CD14-positive monocyte (primary cell): ENCODE measurements at regions of chr10 and their contacts with region 1.

Region 1: DNA sequence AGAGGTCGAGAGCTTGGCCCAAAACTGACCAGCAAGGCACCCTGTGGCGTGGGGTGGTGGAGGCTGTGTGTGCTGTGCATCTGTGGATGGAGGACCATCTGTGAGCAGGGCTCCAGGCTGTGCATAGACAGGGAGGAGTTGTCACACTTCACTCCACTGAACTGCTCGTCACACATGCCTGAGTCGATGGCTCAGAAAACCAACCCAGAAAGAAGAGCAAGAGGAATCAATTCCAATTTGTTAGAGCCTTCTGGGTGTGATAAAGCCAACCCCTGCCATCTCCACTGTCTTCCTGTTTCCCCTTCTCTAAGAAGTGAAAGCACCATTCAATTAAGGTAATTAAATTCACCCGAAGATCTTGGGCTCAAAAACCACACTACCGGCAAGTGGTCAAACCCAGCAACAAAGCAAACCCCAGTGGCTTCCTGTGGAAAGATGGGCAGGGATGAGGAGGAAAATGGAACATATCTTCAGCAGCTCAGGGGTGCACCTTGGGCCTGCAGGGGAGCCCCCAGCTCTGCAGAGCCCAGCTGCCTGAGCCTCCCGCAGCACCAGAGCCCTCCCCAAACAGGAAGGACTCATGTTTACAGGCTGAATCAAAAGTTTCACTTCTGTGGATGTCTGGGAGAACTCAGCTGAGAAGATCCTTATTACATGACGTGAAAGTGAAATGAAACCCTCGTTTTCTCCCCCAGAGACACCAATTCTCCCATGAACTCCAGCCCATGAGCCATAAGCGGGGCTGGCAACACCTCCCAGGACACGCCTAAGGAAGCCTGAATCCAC is 10.8 kb downstream of the C10orf71 start:
- DNase-seq: peak in 2 of 3 donors; percentile 22 to 35
- H3K4me3 ChIP-seq: peak overlapping the region in 2 of 3 experiments; percentile 16 to 47
- H3K4me3 Mint-ChIP-seq: peak overlapping the region; percentile 52 to 56
- H3K27ac ChIP-seq: peak overlapping the region; percentile 95 to 96
- H3K27ac Mint-ChIP-seq: peak overlapping the region; percentile 89 to 96 (median 94)
- H3K4me1 ChIP-seq: peaks cover 39 to 45% of the 10 kb centered on the region in 2 donors
- H3K4me1 Mint-ChIP-seq: peaks cover 56% of the 10 kb centered on the region
- H3K27me3 ChIP-seq: no peaks in the 10 kb centered on the region
- H3K27me3 Mint-ChIP-seq: peaks cover 2 to 7% (median 3%) of the 10 kb centered on the region in 3 donors
- CTCF ChIP-seq: no peak

Region 2: DNA sequence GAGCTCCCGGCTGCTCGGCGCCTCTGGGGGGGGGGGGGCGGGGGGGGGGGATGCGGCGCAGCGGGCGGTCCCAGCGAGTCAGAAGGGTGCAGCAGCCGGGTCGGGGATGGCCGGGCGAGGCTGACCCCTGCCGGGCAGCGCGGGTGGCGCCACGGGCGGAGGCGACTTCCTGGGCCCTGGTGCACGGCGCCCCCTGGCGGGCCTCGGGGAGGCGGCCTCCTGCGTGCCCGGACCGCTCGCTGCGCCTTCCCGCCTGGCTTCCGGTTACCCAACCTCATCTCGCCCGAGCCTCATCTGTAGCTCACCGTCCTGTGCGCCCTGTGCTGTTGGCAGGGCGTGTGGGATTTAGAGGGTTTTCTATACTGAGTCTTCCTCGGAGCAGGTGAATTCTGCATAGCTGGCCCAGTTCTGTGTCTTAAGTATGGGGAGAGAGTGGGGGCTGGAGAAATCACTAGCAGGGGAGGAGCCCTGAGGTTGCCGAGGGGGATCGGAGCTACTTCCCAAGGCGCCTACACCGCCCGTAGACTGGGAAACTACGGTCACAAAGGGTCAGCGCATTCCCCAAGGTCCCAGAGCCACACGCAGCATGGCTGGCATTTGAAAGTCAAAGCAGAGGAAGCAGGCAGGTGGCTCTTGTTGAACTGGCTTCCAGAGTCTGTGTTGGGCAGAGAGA is 653.4 kb before region 1 on chr10:
- intact Hi-C with region 1: no loop called
- DNase-seq: peak; percentile 91 to 96 (median 91)
- H3K4me3 ChIP-seq: peak overlapping the region; percentile 24 to 74 (median 44)
- H3K4me3 Mint-ChIP-seq: peak overlapping the region; percentile 71 to 83
- H3K27ac ChIP-seq: peak overlapping the region in 1 of 2 donors; percentile 54
- H3K27ac Mint-ChIP-seq: peak overlapping the region in 2 of 7 donors; percentile 8 to 60
- H3K4me1 ChIP-seq: peaks cover 36 to 38% of the 10 kb centered on the region in 2 donors
- H3K4me1 Mint-ChIP-seq: peaks cover 28% of the 10 kb centered on the region
- H3K27me3 ChIP-seq: peaks cover 0 to 8% of the 10 kb centered on the region in 2 donors
- H3K27me3 Mint-ChIP-seq: peaks cover 18 to 37% (median 22%) of the 10 kb centered on the region in 3 donors
- CTCF ChIP-seq: peak; percentile 100

Region 3: GRCh38 chr10:49177391-49178355 is 132.1 kb before region 1 on chr10:
- intact Hi-C with region 1: loop called in 1 of 2 experiments (anchors 10 kb)
- DNase-seq: peak; percentile 96 to 99 (median 98)
- H3K4me3 ChIP-seq: no peak overlapping the region
- H3K4me3 Mint-ChIP-seq: peak overlapping the region; percentile 65 to 79
- H3K27ac ChIP-seq: peak overlapping the region; percentile 74 to 93
- H3K27ac Mint-ChIP-seq: peak overlapping the region; percentile 95 to 99 (median 96)
- H3K4me1 ChIP-seq: peaks cover 38 to 43% of the 10 kb centered on the region in 2 donors
- H3K4me1 Mint-ChIP-seq: peaks cover 55% of the 10 kb centered on the region
- H3K27me3 ChIP-seq: no peaks in the 10 kb centered on the region
- H3K27me3 Mint-ChIP-seq: peaks cover 0 to 11% (median 3%) of the 10 kb centered on the region in 3 donors
- CTCF ChIP-seq: no peak

Region 4: GRCh38 chr10:49242604-49243003 is 67.2 kb before region 1 on chr10:
- intact Hi-C with region 1: loop called in 1 of 2 experiments (anchors 5 kb)
- DNase-seq: no peak
- H3K4me3 ChIP-seq: peak overlapping the region in 1 of 3 experiments; percentile 3
- H3K4me3 Mint-ChIP-seq: no peak overlapping the region
- H3K27ac ChIP-seq: peak overlapping the region; percentile 57 to 71
- H3K27ac Mint-ChIP-seq: peak overlapping the region in 6 of 7 donors; percentile 80 to 96 (median 87)
- H3K4me1 ChIP-seq: peaks cover 50 to 55% of the 10 kb centered on the region in 2 donors
- H3K4me1 Mint-ChIP-seq: peaks cover 54% of the 10 kb centered on the region
- H3K27me3 ChIP-seq: no peaks in the 10 kb centered on the region
- H3K27me3 Mint-ChIP-seq: peaks cover 0 to 5% (median 0%) of the 10 kb centered on the region in 3 donors
- CTCF ChIP-seq: no peak

Region 5: DNA sequence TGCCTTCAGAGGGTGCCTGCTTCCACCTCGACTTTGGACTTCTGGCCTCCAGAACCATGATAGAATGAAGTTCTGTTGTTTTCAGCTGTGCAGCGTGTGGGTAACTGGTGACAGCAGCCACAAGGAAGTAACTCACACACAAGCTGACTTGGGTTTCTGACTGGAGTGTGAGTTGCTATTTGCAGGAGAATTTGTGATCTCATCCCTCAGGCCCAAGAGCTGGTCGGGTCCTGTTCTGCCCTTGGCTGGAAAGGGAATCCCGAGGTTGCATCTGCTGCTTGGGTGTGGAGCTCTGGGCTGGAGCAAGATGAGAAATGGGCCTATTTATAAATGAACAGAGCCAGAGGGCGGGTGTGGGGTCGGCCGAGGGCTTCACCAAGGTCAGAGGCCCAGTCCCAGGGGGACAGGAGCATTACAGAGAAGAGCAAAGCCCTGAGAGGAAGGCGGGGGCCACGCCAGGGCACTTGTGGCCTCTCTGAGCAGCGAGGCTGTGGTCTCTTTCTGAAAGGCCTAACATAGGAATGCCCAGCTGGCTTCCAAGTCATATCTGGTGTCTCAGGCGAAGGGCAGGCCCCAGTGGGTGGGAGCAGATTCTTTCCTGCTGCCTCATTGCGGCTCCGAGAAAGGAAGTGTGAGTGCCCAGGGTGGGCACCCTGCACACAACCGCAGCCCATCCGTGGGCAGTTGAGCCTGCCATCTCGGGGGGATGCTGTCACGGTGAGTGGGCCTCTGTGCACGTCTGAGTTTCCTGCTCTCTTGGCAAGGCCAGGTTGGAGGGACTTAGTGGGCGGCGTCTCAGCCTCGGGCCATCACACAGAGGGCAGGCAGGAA is 37.4 kb before region 1 on chr10:
- intact Hi-C with region 1: loop called in 1 of 2 experiments (anchors 5 kb)
- DNase-seq: peak; percentile 36 to 75 (median 38)
- H3K4me3 ChIP-seq: peak overlapping the region in 1 of 3 experiments; percentile 1
- H3K4me3 Mint-ChIP-seq: peak overlapping the region; percentile 55 to 84
- H3K27ac ChIP-seq: peak overlapping the region; percentile 7 to 21
- H3K27ac Mint-ChIP-seq: peak overlapping the region; percentile 66 to 95 (median 79)
- H3K4me1 ChIP-seq: peaks cover 17 to 19% of the 10 kb centered on the region in 2 donors
- H3K4me1 Mint-ChIP-seq: peaks cover 21% of the 10 kb centered on the region
- H3K27me3 ChIP-seq: no peaks in the 10 kb centered on the region
- H3K27me3 Mint-ChIP-seq: peaks cover 3 to 12% (median 5%) of the 10 kb centered on the region in 3 donors
- CTCF ChIP-seq: no peak

Region 6: GRCh38 chr10:49362596-49363260 is 52.9 kb after region 1 on chr10:
- intact Hi-C with region 1: loop called in 1 of 2 experiments (anchors 10 kb)
- DNase-seq: peak; percentile 57 to 85 (median 81)
- H3K4me3 ChIP-seq: peak overlapping the region in 1 of 3 experiments; percentile 19
- H3K4me3 Mint-ChIP-seq: peak overlapping the region in 1 of 2 donors; percentile 73
- H3K27ac ChIP-seq: peak overlapping the region; percentile 57 to 82
- H3K27ac Mint-ChIP-seq: peak overlapping the region; percentile 92 to 97 (median 94)
- H3K4me1 ChIP-seq: peaks cover 36 to 49% of the 10 kb centered on the region in 2 donors
- H3K4me1 Mint-ChIP-seq: peaks cover 41% of the 10 kb centered on the region
- H3K27me3 ChIP-seq: no peaks in the 10 kb centered on the region
- H3K27me3 Mint-ChIP-seq: peaks cover 0 to 12% (median 4%) of the 10 kb centered on the region in 3 donors
- CTCF ChIP-seq: no peak